ENCODE measurements at regions of chr16 and their contacts with region 1.

Region 1: DNA sequence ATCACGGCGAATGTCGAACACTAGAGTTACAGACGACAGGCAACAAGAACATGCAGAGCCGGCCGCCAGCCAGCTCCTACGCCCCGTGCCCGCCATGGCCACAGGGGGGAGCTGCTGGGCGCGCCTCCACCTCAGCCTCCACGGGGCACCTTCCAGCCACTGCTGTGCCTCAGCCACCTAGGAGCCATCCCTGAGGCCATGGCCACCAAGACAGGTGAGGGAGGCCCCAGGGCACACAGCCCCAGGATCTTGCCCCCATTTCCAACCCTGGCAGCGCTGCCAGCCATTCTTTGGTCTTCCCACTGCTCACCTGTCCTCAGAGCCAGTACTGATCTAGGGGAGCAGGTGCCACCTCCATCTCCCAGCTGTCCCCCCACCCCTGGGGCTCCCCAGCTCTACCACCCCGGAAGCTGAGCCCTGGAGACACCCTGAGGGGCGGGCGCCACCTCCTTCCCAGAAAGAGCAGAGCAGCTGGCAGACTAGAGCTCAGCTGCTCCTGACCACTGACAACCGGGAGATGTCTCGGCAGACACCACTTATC is 11.8 kb downstream of the GNPTG start:
- DNase-seq: peak; percentile 79
- ATAC-seq: peak; percentile 96
- H3K4me3 Mint-ChIP-seq: no peak overlapping the region
- H3K27ac Mint-ChIP-seq: no peak overlapping the region
- H3K4me1 Mint-ChIP-seq: peaks cover 2% of the 10 kb centered on the region
- H3K27me3 Mint-ChIP-seq: no peaks in the 10 kb centered on the region

Region 2: GRCh38 chr16:1291576-1291974 is 72.0 kb before region 1 on chr16:
- CTCF ChIA-PET with region 1: no interaction called
- DNase-seq: no peak
- ATAC-seq: no peak
- H3K4me3 Mint-ChIP-seq: no peak overlapping the region
- H3K27ac Mint-ChIP-seq: no peak overlapping the region
- H3K4me1 Mint-ChIP-seq: no peaks in the 10 kb centered on the region
- H3K27me3 Mint-ChIP-seq: peaks cover 58% of the 10 kb centered on the region

Region 3: GRCh38 chr16:1378804-1379303 is 15.3 kb after region 1 on chr16:
- CTCF ChIA-PET with region 1: interaction called, 11 read pairs
- DNase-seq: peak; percentile 78
- ATAC-seq: peak; percentile 65
- H3K4me3 Mint-ChIP-seq: peak overlapping the region; percentile 76
- H3K27ac Mint-ChIP-seq: peak overlapping the region; percentile 85
- H3K4me1 Mint-ChIP-seq: peaks cover 18% of the 10 kb centered on the region
- H3K27me3 Mint-ChIP-seq: no peaks in the 10 kb centered on the region

Region 4: DNA sequence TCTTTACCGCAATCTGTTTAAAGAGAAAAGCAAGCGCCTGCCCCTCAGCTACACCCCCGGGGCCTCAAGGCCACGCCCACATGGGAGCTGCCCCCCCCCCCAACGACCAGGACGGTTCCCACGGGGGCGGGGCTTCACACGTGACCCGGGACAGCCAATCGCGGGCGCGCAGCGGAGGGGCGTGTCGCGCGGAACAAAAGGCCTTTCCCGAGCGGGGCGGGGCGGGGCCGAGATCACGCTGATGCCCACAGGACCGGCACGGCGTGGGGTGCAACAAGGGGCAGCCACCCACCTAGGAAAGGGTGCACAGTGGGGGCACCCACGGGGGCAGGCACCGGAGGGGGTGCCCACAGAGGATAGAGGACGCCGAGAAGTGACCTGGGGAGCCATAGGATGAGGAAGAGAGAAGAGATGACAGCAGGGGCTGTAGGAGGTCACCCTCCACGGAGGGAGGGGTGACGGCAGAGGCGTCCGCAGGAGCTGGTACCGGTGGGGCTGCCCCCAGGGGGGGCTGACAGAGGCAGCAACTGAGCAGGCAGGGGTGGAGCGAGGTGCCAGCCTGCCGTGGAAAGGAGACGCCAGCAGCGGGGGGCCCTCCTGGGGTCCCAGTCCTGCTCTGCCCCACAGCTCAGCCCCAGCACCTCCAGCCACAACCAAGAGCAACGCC is 44.7 kb after region 1 on chr16:
- CTCF ChIA-PET with region 1: interaction called, 23 read pairs
- DNase-seq: peak; percentile 95
- ATAC-seq: peak; percentile 97
- H3K4me3 Mint-ChIP-seq: peak overlapping the region; percentile 75
- H3K27ac Mint-ChIP-seq: no peak overlapping the region
- H3K4me1 Mint-ChIP-seq: peaks cover 14% of the 10 kb centered on the region
- H3K27me3 Mint-ChIP-seq: no peaks in the 10 kb centered on the region

Region 5: DNA sequence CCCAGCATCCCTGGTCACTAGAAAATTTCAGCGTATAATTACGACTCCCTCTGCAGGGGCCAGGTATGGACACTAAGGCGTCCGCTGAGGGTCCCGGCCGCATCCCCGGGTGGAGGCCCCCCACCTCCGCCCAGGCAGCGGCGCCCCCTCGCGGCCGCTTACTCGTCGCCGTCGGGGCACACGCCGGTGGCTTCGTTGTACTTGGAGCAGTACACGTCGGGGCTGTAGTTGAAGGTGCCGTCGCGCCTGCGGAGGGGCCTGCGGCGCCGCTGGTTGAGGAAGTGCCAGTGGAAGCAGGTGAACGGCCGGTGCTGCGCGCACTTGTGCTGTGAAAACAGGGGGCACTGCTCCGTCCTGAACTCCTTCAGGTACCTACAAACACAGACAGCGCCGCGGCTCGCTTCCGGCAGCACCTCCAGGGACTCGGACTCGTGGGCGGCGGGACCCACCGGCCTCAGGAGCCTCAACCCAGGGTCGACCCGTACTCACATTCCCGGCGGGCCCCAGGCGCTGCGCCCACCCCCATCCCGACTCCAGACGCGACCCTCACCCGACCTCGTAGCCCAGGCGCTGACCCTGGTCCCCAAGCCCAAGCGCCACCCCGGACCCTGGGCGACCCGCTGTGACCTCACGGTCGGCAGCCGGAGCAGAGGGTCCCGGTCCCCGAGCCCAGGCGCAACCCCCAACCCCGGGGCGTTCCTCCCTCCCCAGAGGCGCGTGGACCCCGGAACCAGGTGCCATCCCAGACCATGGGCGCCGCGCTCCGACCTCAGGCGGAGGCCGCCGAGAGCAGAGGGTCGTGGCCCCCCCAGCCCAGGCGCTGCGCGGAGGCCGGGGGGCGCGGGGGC is 50.3 kb after region 1 on chr16:
- CTCF ChIA-PET with region 1: interaction called, 23 read pairs
- DNase-seq: peak; percentile 83
- ATAC-seq: peak; percentile 59
- H3K4me3 Mint-ChIP-seq: peak overlapping the region; percentile 80
- H3K27ac Mint-ChIP-seq: peak overlapping the region; percentile 87
- H3K4me1 Mint-ChIP-seq: peaks cover 30% of the 10 kb centered on the region
- H3K27me3 Mint-ChIP-seq: no peaks in the 10 kb centered on the region

Region 6: DNA sequence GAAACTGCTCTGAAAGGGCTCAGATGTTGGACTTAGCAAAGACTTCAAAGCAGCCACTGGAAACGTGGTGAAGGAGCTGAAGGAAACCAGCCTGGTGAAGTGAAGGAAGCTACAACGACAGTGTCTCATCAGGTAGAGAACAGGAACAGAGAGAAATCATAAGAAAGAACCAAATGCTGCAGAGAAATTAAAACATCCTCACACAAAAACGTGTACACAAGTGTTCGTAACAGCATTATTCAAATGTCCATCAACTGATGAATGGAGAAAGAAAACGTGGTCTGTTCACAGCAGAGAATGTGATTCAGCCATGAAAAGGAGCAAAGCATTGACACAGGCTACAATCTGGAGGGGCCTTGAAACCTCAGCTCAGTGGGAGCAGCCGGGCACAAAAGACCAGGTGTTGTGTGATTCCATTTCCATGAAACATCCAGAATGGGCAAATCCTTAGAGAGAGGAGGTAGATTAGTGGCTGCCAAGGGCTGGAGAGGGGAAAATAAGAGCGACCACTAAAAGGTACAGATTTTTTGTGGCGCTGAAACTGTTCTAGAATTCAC is 221.4 kb after region 1 on chr16:
- CTCF ChIA-PET with region 1: no interaction called
- DNase-seq: no peak
- ATAC-seq: no peak
- H3K4me3 Mint-ChIP-seq: no peak overlapping the region
- H3K27ac Mint-ChIP-seq: no peak overlapping the region
- H3K4me1 Mint-ChIP-seq: peaks cover 7% of the 10 kb centered on the region
- H3K27me3 Mint-ChIP-seq: no peaks in the 10 kb centered on the region

Measured in activated CD8-positive, alpha-beta memory T cell treated with anti-CD3 and anti-CD28 coated beads, Interleukin-2, amount 10 ng/mL, durations not matched to agents 7 days and 5 days (primary cell).